Spleen (tissue), 13 donors: ENCODE measurements at regions of chr16 and their contacts with region 1.

Region 1: DNA sequence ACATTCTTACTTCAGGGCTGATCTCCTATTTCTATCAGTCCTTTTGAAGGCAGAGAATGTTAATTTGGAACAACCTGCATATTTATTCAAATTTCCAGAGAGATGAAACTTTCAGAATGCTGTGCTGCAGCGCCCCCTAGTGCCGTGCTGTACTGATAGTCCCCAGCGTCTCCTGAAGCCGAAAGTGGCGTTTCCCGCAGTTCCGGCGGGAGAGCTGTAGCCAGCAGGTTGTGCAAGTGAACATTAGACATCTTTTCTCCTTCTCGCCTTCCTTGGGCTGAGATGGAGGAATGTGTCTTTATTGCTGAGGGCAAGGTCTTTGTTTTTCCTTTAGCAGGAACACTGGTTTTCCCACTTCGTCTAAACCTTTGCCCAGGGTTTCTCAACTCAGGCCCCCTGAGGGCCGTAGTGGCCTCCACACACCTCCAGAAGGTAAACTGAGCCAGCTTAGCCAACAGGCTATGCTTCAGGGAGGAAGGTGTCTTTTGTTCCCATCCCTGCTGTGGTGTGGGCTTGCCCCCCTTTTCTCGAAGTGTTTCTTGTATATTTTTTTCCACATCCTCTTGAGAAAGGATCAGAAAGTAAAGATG is 26.4 kb downstream of the USP10 start:
- DNase-seq: peak; percentile 95
- H3K4me3 ChIP-seq: peak overlapping the region in 5 of 8 donors; percentile 19 to 54 (median 22)
- H3K27ac ChIP-seq: peak overlapping the region; percentile 14 to 83 (median 73)
- H3K4me1 ChIP-seq: peaks cover 51 to 100% (median 75%) of the 10 kb centered on the region in 6 donors
- H3K27me3 ChIP-seq: no peaks in the 10 kb centered on the region
- CTCF ChIP-seq: peak; percentile 79 to 98 (median 93)
- POLR2A ChIP-seq: no peak

Region 2: GRCh38 chr16:84511180-84511824 is 214.9 kb before region 1 on chr16:
- intact Hi-C with region 1: loop called (anchors 5 kb)
- DNase-seq: peak; percentile 96
- H3K4me3 ChIP-seq: peak overlapping the region in 1 of 8 donors; percentile 36
- H3K27ac ChIP-seq: peak overlapping the region in 4 of 8 donors; percentile 5 to 44 (median 30)
- H3K4me1 ChIP-seq: peaks cover 11 to 77% (median 51%) of the 10 kb centered on the region in 6 donors
- H3K27me3 ChIP-seq: no peaks in the 10 kb centered on the region
- CTCF ChIP-seq: peak; percentile 96 to 99 (median 98)
- POLR2A ChIP-seq: no peak

Region 3: DNA sequence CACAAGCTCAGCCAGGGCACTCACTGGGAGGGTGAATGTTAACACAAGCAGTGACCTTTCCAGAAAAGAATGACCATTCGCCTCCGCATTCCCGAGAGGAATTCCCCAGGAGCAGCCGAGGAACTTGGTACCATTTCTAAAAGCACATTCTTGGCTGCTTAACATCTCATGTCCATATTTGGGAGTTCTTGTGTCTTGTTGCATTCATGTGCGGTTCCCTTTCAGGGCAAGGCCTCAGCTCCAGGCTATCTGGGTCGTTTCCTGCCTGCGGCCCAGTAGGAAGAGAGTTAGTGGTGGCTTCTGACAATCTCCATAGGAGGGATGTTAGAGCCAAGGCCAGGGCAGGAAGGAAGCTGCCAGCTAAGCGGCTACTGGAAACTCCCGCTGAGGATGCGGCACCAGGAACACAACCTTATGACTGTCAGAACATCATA is 193.9 kb before region 1 on chr16:
- intact Hi-C with region 1: no loop called
- DNase-seq: peak; percentile 84
- H3K4me3 ChIP-seq: no peak overlapping the region
- H3K27ac ChIP-seq: peak overlapping the region; percentile 61 to 85 (median 82)
- H3K4me1 ChIP-seq: peaks cover 18 to 67% (median 47%) of the 10 kb centered on the region in 6 donors
- H3K27me3 ChIP-seq: no peaks in the 10 kb centered on the region
- CTCF ChIP-seq: no peak
- POLR2A ChIP-seq: no peak

Region 4: DNA sequence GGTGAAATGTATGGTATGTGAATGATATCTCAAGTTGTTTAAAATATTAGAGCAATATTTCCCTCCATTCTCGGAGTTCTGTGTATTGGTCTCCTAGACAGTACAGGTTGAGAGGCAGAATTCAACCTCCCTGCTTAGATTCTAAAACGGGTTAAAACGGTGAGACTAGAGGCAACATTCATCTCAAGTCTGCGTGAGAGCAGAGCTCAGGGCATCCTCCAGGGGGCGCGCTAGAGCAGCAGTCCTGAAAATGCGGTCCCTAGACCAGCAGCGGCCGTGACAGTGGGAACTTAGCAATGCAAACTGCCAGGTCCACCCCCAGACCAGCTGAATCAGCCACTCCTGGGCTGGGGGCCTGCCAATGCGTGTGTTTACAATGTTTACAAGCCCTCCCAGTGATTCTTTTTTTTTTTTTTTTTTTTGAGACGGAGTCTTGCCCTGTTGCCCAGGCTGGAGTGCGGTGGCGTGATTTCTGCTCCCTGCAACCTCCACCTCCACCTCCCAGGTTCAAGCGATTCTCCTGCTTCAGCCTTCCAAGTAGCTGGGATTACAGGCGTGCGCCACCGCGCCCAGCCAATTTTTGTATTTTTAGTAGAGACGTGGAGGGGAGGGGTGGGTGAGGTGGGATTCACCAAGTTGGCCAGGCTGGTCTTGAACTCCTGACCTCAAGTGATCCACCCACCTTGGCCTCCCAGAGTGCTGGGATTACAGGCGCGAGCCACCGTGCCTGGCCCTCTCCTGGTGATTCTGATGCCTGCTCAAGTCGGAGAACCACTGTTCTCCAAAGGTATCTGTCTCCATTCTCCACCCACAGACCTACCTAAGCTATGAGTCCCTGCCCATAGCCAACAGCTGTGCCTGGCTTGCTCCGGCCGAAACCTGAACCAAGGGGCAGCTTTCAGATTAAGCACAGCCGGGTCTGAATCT is 53.6 kb before region 1 on chr16:
- intact Hi-C with region 1: loop called (anchors 5 kb)
- DNase-seq: peak; percentile 96
- H3K4me3 ChIP-seq: no peak overlapping the region
- H3K27ac ChIP-seq: no peak overlapping the region
- H3K4me1 ChIP-seq: peaks cover 0 to 13% (median 5%) of the 10 kb centered on the region in 6 donors
- H3K27me3 ChIP-seq: no peaks in the 10 kb centered on the region
- CTCF ChIP-seq: peak; percentile 53 to 96 (median 89)
- POLR2A ChIP-seq: peak in 1 of 3 donors; percentile 12